ENCODE measurements at regions of chr10 and their contacts with region 1.

Region 1: DNA sequence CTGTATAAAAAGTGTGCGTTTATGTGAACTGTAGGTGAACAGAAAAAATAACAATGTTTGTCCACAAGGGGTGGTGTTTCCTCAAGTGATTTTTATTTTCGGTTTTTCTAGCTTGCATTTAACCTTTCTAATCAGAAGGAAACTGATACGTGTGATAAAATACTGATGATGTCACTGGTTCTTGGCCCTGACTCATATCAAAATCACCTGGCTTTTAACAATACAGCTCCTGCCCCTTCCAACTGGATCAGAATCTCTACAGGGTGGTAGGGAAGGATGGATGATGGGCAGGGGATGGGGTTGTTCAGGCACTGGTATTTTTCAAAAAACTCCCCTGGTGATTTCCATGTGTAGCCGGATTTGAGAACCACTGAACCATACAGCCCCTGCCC is 10.9 kb downstream of the NPFFR1 start:
- DNase-seq: no peak

Region 2: GRCh38 chr10:70227548-70228320 is 45.2 kb before region 1 on chr10:
- intact Hi-C with region 1: loop called (anchors 10 kb)
- DNase-seq: no peak

Region 3: GRCh38 chr10:70363971-70364771 is 91.2 kb after region 1 on chr10:
- intact Hi-C with region 1: loop called (anchors 2 kb)
- DNase-seq: peak; percentile 95